Activated T-helper 2 cell treated with anti-CD3 and anti-CD28 coated beads, Interferon-gamma antibody, Interleukin-2, Interleukin-4, amounts not matched to agents 10 μg/mL and 5 μg/mL and 100 μg/mL, durations not matched to agents 14 hours and 24 hours and 36 hours (primary cell): ENCODE measurements at regions of chr16 and their contacts with region 1.

Region 1: DNA sequence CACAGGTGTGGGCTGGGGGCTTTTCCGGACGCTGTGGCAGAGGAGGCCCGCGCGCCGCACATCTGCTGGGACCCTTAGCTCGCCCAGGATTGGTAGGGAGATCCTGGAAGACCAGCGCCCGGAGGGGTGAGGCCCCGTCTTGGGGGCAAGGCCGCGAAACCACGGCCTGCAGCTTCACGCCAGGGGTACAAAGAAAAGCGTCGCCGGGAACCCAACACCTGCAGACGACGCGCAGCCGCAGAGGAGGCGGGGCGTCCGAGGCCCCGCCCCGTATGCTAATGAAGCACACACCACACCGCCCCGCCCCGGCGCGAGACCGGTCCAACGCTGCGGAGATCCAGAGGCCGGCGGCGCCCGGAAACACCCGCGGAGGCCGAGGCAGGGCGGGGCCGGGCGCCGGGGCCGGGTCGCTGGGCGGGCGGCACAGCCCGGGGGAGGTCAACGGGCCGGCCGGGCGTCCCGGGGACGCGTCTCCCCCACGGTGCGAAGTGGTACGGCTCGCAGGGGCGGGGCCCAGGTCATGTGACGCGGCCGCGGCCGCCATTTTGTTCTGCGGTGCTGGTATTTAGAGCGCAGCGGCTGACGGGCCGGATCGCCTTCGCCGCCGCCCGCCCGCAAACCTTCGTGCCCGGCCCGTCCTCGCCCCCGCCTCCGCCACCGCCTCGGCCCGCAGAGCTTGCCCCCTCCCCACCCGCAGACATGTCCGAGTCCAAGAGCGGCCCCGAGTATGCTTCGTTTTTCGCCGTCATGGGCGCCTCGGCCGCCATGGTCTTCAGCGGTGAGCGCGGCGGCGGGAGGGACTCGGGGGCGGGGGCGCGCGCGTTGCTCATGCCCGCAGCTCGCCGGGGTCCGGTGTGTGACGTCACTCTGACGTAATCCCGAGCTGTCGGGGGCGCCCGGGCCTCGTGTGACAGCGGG is at the start of gene ATP6V0C:
- DNase-seq: peak; percentile 89
- H3K4me3 Mint-ChIP-seq: peak within 1 kb of the TSS; percentile 88
- H3K27ac Mint-ChIP-seq: peak within 1 kb of the TSS; percentile 86
- H3K4me1 Mint-ChIP-seq: peaks cover 29% of the 10 kb centered on the region
- H3K27me3 Mint-ChIP-seq: no peaks in the 10 kb centered on the region
- total RNA-seq, gene ATP6V0C: 114 and 119 TPM in 2 replicates

Region 2: DNA sequence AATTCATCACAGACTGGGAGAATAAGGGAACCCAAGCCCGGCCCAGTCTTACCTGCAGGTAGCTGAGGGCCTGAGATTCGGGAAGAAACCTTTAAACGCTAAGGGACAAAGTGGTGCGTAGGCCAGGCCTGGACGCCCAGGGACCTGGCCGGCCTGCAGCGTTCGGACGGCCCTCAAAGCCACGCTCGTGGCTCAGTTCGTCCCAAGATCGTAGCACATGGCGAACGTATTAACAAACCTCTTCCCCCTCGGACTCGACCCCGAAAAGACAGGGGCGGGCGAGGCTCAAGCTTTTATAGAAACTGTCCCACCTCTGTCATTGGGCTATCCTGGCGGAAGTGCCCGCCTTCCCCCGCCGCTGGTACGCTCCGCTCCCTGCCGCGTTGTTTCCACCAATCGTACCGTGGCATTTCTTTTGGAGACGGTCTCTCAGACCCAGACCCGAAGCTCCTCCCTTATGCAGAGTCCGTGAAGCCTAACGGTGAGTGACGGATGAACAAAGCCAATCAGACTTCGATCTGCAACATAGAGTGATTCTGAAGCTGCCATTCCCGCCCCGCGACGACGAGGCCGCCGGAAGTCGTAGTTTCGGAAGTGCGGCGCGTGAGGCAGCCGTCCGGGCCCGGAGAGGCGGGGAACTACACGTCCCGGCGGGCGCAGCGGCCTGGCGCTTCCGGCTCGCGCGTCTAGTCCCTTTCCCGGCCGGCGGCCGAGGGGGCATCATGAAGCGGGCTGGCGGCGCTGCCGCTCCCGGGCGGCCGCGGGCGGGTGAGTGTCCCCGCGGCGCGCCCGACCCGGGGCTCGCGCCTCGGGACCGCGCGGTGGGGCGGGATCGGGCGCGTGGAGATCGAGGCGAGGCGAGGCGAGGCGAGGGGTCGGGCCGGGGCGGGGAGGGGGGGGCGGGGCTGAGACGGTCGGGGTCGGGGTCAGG is 358.3 kb before region 1 on chr16 and contains the start of gene TRAF7:
- intact Hi-C with region 1: loop called (anchors 10 kb)
- DNase-seq: peak; percentile 98
- H3K4me3 Mint-ChIP-seq: peak within 1 kb of the TSS; percentile 92
- H3K27ac Mint-ChIP-seq: peak within 1 kb of the TSS; percentile 87
- H3K4me1 Mint-ChIP-seq: peaks cover 20% of the 10 kb centered on the region
- H3K27me3 Mint-ChIP-seq: no peaks in the 10 kb centered on the region
- total RNA-seq, gene TRAF7: 69.8 and 70.7 TPM in 2 replicates

Region 3: GRCh38 chr16:2223375-2224182 is 290.1 kb before region 1 on chr16 and contains the start of gene E4F1:
- intact Hi-C with region 1: loop called (anchors 2 kb)
- DNase-seq: peak; percentile 100
- H3K4me3 Mint-ChIP-seq: peak within 1 kb of the TSS; percentile 82
- H3K27ac Mint-ChIP-seq: peak within 1 kb of the TSS; percentile 75
- H3K4me1 Mint-ChIP-seq: peaks cover 8% of the 10 kb centered on the region
- H3K27me3 Mint-ChIP-seq: no peaks in the 10 kb centered on the region
- total RNA-seq, gene E4F1: 29.3 and 30.0 TPM in 2 replicates

Region 4: DNA sequence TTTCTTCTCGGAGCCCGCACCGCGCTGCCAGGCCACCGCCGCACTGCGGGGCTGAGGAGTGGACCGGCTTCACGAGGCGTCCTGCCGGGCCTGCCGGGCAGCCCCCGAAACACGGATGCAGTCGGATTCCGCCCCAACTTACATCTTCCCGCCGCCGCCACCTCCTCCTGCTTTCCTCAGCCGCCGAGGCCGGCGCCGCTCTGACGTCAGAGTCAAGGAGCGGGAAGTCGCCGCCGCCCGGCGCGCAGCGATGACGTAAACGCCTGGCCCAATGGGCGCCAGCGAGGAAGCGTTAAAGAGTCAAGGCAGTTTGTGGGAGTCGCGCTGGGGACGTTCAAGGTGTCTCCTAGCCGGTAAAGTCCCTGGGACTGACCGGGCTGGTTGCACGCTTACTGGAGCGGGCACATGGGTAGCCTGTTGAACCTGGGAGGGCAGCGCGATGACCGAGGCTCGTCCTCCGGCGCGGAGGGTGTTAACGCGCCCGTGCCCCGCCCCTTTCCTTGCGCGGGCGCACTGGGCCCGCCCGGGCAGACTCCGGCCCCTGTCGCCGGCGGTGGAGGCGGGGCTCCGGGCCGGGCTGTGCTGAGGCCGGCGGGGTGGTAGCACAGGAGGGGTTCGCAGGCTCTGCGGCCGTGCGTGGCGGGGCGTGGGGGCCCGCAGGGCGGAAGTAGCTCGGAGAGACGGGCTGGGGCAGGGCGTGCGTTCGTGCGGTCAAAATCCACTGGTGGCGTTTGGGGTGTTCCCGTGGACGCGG is 245.6 kb before region 1 on chr16 and contains the start of gene RNPS1:
- intact Hi-C with region 1: loop called (anchors 10 kb)
- DNase-seq: peak; percentile 97
- H3K4me3 Mint-ChIP-seq: peak within 1 kb of the TSS; percentile 89
- H3K27ac Mint-ChIP-seq: peak within 1 kb of the TSS; percentile 98
- H3K4me1 Mint-ChIP-seq: peaks cover 29% of the 10 kb centered on the region
- H3K27me3 Mint-ChIP-seq: no peaks in the 10 kb centered on the region
- total RNA-seq, gene RNPS1: 369 TPM in 2 replicates

Region 5: DNA sequence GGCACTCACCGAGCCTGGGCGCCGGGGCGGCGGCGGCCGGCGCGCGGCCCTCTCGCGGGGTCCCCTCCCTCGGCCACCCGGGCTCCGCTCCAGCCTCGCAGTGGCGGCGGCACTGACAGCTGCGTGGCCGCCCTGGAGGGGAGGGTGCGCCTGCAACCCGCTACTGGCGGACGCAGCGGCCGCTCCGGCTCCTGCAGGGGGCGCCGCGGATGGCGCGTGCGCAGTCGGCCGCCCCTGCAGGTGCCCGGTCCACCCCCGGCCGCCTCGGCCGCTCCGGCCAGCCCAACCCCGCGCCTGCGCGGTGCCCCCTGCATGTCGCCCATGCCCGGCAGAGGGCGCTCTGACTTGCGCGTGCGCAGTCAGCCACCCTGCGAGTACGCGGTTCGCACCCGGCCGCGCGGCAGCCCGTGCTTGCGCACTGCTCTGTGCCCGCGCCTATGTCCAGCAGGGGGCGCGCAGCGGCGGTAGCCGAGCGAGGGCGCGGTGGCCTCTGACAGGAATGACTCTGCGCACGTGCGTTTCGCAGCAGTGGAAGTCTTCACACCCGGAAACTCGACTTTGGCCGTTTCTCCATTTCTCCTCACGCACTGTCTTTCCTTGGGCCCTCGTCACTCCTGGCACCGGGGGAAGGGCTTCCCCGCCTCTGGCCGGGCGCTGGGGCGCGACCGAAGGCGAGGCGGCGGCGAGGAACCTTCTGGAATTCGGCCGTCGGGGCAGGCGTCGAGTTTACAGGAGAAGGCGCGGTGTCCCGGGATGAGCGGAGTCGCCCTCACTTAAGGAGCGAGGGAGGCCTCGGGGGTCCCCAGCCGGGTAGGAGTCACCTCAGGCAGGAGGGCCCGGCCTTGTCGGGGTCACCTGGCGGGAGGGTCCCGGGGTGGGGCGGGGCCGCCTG is 172.9 kb before region 1 on chr16 and contains the start of gene ABCA3:
- intact Hi-C with region 1: loop called (anchors 5 kb)
- DNase-seq: peak; percentile 96
- H3K4me3 Mint-ChIP-seq: peak within 1 kb of the TSS; percentile 84
- H3K27ac Mint-ChIP-seq: peak within 1 kb of the TSS; percentile 33
- H3K4me1 Mint-ChIP-seq: peaks cover 23% of the 10 kb centered on the region
- H3K27me3 Mint-ChIP-seq: peaks cover 28% of the 10 kb centered on the region
- total RNA-seq, gene ABCA3: 11.1 and 12.5 TPM in 2 replicates

Region 6: DNA sequence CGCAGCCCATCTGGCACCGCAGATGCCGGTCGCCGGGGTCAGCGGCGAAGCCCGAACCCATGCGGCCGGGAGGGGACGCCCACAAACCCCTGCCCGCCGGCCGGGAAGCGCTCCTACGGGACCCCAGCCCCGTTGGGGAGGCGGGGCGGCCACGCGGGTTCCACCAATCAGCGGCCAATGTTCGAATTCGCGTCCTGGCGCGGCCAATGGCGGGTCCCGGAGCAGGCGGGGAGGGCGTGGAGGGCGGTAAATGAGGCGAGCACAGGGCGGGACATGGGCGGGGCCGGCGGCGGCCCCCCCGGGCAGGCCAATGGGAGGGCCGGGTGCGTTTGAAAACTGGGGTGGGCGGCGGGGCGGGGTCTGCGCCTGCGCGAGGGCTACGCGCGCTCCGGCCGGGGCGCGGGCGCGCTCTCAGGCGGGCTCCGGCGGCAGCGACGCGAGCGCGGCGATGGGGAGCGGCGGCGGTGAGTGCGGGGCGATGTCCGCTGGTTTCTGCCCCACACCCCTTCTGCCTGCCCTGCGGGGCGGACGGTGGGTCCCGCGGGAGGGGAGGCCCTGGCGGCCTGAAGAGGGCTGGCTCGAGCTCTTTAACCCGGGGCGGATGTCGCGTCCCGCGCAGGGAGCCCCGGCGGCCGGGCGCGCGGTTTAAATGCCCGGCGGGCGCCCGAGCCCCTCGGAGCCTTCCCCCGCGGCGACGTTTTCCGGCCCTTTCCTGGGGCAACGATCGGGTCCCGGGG is 84.5 kb before region 1 on chr16 and contains the start of gene CCNF:
- intact Hi-C with region 1: loop called (anchors 2 kb)
- DNase-seq: peak; percentile 94
- H3K4me3 Mint-ChIP-seq: peak within 1 kb of the TSS; percentile 96
- H3K27ac Mint-ChIP-seq: peak within 1 kb of the TSS; percentile 62
- H3K4me1 Mint-ChIP-seq: peaks cover 27% of the 10 kb centered on the region
- H3K27me3 Mint-ChIP-seq: no peaks in the 10 kb centered on the region
- total RNA-seq, gene CCNF: 48.4 and 48.9 TPM in 2 replicates

Region 7: DNA sequence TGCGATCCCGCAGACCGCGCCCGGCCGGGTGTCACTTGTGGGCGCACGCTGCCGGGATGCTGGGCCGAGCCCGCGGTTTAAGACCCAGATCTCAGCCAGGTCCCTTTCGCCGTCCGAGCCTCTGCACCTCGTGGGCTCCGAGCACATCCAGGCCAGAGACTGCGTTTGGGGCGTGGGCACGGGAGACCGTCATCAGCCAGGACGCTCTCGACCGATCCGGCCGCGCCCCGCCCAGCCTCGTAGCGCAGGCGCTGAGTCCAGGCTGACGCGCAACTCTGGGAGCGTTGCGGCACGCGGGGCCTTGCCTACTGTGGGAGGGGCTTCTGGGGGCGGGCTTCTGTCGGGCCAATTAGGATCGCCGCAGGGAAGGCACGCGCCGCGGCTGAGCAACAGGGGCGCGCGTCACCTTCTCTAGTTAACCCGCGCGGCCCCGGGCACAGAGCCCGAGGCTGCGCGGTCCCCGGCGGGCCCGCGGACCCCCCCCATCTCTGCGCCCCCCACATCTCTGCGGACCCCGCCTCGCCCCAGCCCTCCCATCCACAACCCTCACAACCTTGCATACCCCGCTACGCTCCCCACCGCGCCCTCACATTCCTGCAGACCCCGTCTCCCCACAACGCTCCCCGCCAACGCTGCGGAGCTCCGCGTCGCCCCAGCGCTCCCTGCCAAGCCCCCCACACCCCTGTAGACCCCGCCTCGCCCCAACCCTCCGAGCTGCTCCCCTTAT is 18.3 kb after region 1 on chr16:
- intact Hi-C with region 1: loop called (anchors 2 kb)
- DNase-seq: peak; percentile 97
- H3K4me3 Mint-ChIP-seq: peak overlapping the region; percentile 98
- H3K27ac Mint-ChIP-seq: peak overlapping the region; percentile 100
- H3K4me1 Mint-ChIP-seq: peaks cover 15% of the 10 kb centered on the region
- H3K27me3 Mint-ChIP-seq: no peaks in the 10 kb centered on the region